CD14-positive monocyte (primary cell): ENCODE measurements at regions of chr21 and their contacts with region 1.

Region 1: GRCh38 chr21:44965251-44966022 is 25.6 kb downstream of the SLX9 start:
- DNase-seq: peak; percentile 15 to 34 (median 18)
- H3K4me3 ChIP-seq: peak overlapping the region in 1 of 3 experiments; percentile 23
- H3K4me3 Mint-ChIP-seq: peak overlapping the region; percentile 41 to 65
- H3K27ac ChIP-seq: no peak overlapping the region
- H3K27ac Mint-ChIP-seq: peak overlapping the region in 6 of 7 donors; percentile 16 to 93 (median 35)
- H3K4me1 ChIP-seq: peaks cover 59% of the 10 kb centered on the region in 2 donors
- H3K4me1 Mint-ChIP-seq: peaks cover 60% of the 10 kb centered on the region
- H3K27me3 ChIP-seq: no peaks in the 10 kb centered on the region
- H3K27me3 Mint-ChIP-seq: peaks cover 1 to 9% (median 3%) of the 10 kb centered on the region in 3 donors
- CTCF ChIP-seq: no peak

Region 2: GRCh38 chr21:44761011-44761729 is 204.3 kb before region 1 on chr21:
- intact Hi-C with region 1: no loop called
- DNase-seq: no peak
- H3K4me3 ChIP-seq: no peak overlapping the region
- H3K4me3 Mint-ChIP-seq: no peak overlapping the region
- H3K27ac ChIP-seq: no peak overlapping the region
- H3K27ac Mint-ChIP-seq: no peak overlapping the region
- H3K4me1 ChIP-seq: no peaks in the 10 kb centered on the region
- H3K4me1 Mint-ChIP-seq: peaks cover 3% of the 10 kb centered on the region
- H3K27me3 ChIP-seq: no peaks in the 10 kb centered on the region
- H3K27me3 Mint-ChIP-seq: peaks cover 0 to 4% (median 1%) of the 10 kb centered on the region in 3 donors
- CTCF ChIP-seq: no peak

Region 3: DNA sequence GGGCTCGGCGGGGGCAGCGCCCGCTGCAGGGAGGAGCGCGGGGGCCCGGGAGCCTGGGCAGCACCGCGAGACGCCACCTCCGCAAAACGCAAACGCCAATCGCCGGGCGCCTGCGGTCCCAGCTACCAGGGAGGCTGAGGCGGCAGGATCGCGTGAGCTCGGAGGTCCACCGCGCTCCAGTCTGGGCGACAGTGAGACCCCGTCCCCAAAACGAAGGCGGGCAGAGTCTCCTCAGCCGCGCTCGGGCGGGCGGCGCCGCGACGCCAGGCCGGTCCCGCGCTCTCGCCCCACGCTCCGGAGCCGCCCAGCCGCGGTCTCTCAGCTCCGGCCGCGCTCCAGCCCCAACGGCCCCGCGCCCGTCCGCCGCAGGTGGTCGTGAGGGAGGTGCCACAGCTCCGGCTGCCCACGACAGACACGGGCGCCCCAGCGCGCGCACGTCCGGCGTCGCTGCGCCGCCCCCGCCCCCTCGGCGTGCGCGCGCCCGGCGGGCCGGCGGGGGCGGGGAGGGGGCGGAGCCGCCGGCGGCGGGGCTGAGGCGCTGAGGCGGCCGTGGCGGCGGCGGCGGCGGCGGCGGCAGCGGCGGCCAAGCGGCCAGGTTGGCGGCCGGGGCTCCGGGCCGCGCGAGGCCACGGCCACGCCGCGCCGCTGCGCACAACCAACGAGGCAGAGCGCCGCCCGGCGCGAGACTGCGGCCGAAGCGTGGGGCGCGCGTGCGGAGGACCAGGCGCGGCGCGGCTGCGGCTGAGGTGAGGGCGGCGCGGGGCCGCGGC is 108.8 kb after region 1 on chr21 and contains the start of gene ADARB1:
- intact Hi-C with region 1: loop called in 1 of 2 experiments (anchors 5 kb)
- DNase-seq: peak; percentile 30 to 55 (median 54)
- H3K4me3 ChIP-seq: peak within 1 kb of the TSS; percentile 50 to 82 (median 82)
- H3K4me3 Mint-ChIP-seq: peak within 1 kb of the TSS; percentile 89 to 92
- H3K27ac ChIP-seq: no peak within 1 kb of the TSS
- H3K27ac Mint-ChIP-seq: peak within 1 kb of the TSS in 5 of 7 donors; percentile 53 to 75 (median 67)
- H3K4me1 ChIP-seq: peaks cover 30 to 39% of the 10 kb centered on the region in 2 donors
- H3K4me1 Mint-ChIP-seq: peaks cover 30% of the 10 kb centered on the region
- H3K27me3 ChIP-seq: peaks cover 11 to 22% of the 10 kb centered on the region in 2 donors
- H3K27me3 Mint-ChIP-seq: peaks cover 18 to 31% (median 28%) of the 10 kb centered on the region in 3 donors
- CTCF ChIP-seq: no peak
- polyA plus RNA-seq, gene ADARB1: 0.40 to 2.6 (median 1.0) TPM